PC-3 (cell line): ENCODE measurements at regions of chr4 and their contacts with region 1.

Region 1: DNA sequence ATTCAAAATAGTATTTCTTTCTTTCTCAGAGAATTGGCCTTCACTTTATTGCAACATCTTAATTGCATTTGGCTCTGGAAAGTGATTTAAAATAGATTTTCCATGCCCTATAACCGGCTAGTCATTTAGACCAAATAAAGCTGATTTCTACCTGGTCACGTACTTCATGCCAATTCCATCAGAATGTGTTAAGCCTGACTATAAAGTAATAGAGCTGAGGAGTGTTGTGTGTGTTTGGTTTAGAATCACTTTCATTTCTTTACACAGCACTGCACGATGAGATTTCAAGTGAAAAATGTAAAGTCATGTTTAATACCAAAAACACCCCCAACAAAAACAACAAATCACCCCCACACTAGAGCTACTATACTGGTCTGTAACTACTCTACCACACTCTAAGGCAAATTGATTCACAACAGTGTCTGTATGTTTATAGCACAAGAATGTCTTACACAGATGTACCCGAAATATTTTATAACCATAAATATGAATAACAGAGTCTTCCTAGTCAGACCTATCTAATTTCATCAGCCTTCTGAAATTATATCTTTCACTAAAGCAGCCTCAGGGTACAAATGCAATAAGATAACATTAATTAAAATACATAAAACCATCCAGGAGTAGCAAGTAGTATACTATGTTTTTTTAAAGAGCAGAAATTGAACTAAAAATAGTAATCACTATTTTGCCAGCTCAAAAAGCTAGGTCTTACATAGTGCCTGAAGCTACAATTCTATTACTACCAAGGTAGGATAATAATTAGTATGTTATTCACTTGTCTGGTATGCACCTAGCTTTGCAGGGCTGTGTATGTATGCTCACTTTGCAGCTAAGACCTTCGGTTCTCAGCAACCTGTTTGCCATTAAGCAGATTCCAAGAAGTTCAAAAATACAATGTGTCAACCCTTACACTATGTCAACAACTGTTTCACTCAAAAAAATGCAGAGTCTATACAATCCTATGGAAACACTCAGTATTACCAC is 28.4 kb downstream of the APBB2 start:
- DNase-seq: peak; percentile 58
- ATAC-seq: peak; percentile 64
- H3K4me3 ChIP-seq: no peak overlapping the region
- H3K27ac ChIP-seq: no peak overlapping the region
- H3K4me1 ChIP-seq: peaks cover 24% of the 10 kb centered on the region
- H3K27me3 ChIP-seq: no peaks in the 10 kb centered on the region
- CTCF ChIP-seq: no peak

Region 2: DNA sequence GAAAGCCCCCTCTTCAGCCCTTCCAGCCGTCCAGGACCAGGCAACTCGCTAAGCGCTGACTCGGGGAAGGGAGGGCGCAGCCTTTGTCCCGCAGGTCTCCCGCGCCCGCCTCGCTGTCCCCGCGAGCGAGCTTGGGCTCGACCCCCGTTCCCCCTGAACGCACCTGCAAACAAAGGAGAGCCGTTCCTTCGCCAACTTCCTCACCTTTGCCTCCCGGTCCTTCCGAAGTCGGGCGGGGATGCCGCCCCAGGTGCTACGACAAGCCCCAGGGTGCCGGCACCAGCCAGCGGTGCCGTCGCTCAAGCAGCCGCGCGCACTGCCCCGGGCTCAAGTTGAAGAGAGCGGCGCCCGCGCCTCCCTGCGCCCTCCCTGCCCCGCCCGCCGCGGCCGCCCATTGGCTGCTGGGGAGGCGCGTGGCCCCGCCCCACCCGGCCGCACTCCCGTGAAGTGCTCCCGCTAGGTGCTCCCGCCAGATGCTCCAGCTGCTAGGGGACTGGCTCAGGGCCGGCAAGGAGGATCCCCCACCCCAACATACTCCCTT is 329.0 kb before region 1 on chr4:
- CTCF ChIA-PET with region 1: no interaction called
- POLR2A ChIA-PET with region 1: no interaction called
- intact Hi-C with region 1: no loop called
- DNase-seq: peak; percentile 51
- ATAC-seq: peak; percentile 92
- H3K4me3 ChIP-seq: peak overlapping the region; percentile 60; the same call in 1 of the 2 replicates
- H3K27ac ChIP-seq: no peak overlapping the region
- H3K4me1 ChIP-seq: no peaks in the 10 kb centered on the region
- H3K27me3 ChIP-seq: no peaks in the 10 kb centered on the region
- CTCF ChIP-seq: no peak

Region 3: GRCh38 chr4:41200486-41201017 is 14.6 kb after region 1 on chr4:
- CTCF ChIA-PET with region 1: no interaction called
- POLR2A ChIA-PET with region 1: no interaction called
- intact Hi-C with region 1: loop called (anchors 2 kb)
- DNase-seq: no peak
- ATAC-seq: no peak; the same call in 1 of the 2 replicates
- H3K4me3 ChIP-seq: no peak overlapping the region
- H3K27ac ChIP-seq: no peak overlapping the region
- H3K4me1 ChIP-seq: peaks cover 16% of the 10 kb centered on the region
- H3K27me3 ChIP-seq: no peaks in the 10 kb centered on the region
- CTCF ChIP-seq: no peak